ENCODE measurements at regions of chr3 and their contacts with region 1.

Region 1: DNA sequence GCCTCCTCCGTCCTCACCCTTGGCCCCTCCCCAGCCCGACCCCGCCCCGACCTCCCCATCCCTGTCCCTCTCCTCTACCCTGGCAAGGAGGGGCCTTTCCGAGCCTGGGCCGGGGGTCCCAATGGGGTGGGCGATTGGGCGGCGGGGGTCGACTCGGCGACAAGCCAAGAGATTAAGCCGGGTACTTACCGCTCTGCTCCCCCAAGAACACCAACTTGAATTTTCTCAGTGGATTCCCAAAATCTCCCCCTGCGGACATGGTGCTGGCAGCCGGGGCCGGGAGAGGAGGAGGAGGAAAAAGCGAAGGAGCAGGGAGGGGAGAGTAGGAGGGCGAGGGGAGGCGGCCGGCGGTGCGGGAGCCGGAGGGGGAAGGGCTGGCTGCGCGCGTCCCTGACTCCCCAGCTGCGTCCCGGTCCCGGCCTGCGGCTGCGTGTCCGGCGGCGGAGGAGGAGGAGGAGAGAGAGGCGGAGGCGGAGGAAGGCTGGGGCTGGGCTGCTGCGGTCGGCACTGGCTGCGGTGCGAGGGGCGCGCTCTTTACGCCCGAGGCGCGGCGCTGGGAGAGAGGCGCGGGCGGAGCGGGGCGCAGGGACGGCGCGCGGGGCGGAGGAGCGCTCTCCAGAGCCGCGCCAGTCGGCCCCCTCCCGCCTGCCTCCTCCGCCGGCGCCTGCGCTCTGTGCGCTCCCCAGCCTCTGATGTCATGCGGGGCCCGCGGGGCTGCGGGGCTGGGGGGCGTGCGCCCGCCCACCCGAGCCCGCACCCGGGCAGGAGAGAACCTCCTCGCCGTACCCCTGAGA is at the start of gene RAB6B:
- DNase-seq: peak; percentile 48 to 75 (median 54)
- ATAC-seq: peak; percentile 40 to 86 (median 73)
- H3K4me3 ChIP-seq: peak within 1 kb of the TSS; percentile 60 to 85 (median 72)
- H3K27ac ChIP-seq: peak within 1 kb of the TSS in 10 of 12 donors; percentile 9 to 78 (median 52)
- H3K4me1 ChIP-seq: peaks cover 0 to 44% (median 17%) of the 10 kb centered on the region in 12 donors
- H3K27me3 ChIP-seq: peaks cover 0 to 29% (median 0%) of the 10 kb centered on the region in 9 donors
- CTCF ChIP-seq: no peak
- POLR2A ChIP-seq: peak in 1 of 2 donors; percentile 35
- total RNA-seq, gene RAB6B: 12.4 to 57.2 (median 44.6) TPM

Region 2: DNA sequence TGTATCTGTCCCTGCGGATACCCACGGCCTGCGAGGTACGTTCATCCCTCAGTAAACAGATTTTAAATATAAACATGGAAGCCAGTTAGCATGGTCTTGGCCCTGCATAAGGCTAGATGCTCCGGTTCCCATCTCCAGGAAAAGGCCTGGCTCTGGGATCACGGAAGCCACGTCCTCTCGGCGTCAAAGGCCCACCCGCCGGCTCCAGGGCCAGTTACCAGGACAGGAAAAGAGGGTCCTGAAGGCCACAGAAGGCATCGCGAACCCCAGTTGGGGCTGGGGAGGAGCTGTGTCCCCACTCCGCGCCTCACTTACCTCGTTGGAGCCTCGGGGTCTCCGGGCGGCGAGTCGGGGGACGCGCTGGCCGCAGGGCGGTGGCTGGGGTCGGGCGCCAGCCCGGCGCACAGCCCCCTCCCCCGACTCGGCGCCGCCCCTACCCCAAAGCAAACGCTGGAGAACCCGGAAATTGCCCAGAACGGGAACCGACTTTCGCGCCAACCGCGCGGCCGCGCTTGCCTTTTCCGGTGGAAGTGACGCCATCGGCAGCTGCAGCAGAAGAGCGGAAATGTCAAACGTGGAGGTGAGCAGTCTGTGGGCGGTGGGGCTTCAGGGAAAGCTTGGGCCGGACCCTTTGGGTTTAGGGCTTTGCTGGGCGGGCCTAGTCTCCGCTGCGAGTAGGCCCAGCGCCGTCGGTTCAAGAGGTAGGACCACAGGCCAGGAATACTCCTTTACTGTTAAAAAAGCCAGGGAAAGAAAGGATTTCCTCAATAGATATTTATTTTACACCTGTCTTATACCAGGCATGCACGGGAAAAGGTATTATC is 233.7 kb before region 1 on chr3 and contains the start of gene TOPBP1:
- intact Hi-C with region 1: loop called in 2 of 10 experiments (anchors 10 kb)
- DNase-seq: peak; percentile 81 to 90 (median 84)
- ATAC-seq: peak; percentile 57 to 95 (median 94)
- H3K4me3 ChIP-seq: peak within 1 kb of the TSS; percentile 75 to 92 (median 85)
- H3K27ac ChIP-seq: peak within 1 kb of the TSS; percentile 50 to 92 (median 82)
- H3K4me1 ChIP-seq: peaks cover 0 to 30% (median 15%) of the 10 kb centered on the region in 12 donors
- H3K27me3 ChIP-seq: no peaks in the 10 kb centered on the region
- CTCF ChIP-seq: no peak
- POLR2A ChIP-seq: peak in 1 of 2 donors; percentile 12
- total RNA-seq, gene TOPBP1: 7.9 to 18.3 (median 11.8) TPM

Region 3: GRCh38 chr3:133821767-133822638 is 73.4 kb before region 1 on chr3:
- intact Hi-C with region 1: loop called in 7 of 10 experiments (anchors 2 to 10 kb)
- DNase-seq: peak in 4 of 5 donors; percentile 71 to 89 (median 78)
- ATAC-seq: peak in 3 of 4 donors; percentile 44 to 80 (median 48)
- H3K4me3 ChIP-seq: no peak overlapping the region
- H3K27ac ChIP-seq: peak overlapping the region in 2 of 12 donors; percentile 2 to 23
- H3K4me1 ChIP-seq: peaks cover 0 to 11% (median 4%) of the 10 kb centered on the region in 12 donors
- H3K27me3 ChIP-seq: no peaks in the 10 kb centered on the region
- CTCF ChIP-seq: peak in 6 of 12 donors; percentile 11 to 61 (median 32)
- POLR2A ChIP-seq: no peak

Region 4: GRCh38 chr3:133828581-133829309 is 66.7 kb before region 1 on chr3:
- intact Hi-C with region 1: loop called in 6 of 10 experiments (anchors 2 to 10 kb)
- DNase-seq: peak in 4 of 5 donors; percentile 34 to 73 (median 58)
- ATAC-seq: peak; percentile 64 to 82 (median 78)
- H3K4me3 ChIP-seq: no peak overlapping the region
- H3K27ac ChIP-seq: peak overlapping the region in 7 of 12 donors; percentile 13 to 74 (median 53)
- H3K4me1 ChIP-seq: peaks cover 0 to 24% (median 9%) of the 10 kb centered on the region in 12 donors
- H3K27me3 ChIP-seq: no peaks in the 10 kb centered on the region
- CTCF ChIP-seq: no peak
- POLR2A ChIP-seq: no peak

Region 5: DNA sequence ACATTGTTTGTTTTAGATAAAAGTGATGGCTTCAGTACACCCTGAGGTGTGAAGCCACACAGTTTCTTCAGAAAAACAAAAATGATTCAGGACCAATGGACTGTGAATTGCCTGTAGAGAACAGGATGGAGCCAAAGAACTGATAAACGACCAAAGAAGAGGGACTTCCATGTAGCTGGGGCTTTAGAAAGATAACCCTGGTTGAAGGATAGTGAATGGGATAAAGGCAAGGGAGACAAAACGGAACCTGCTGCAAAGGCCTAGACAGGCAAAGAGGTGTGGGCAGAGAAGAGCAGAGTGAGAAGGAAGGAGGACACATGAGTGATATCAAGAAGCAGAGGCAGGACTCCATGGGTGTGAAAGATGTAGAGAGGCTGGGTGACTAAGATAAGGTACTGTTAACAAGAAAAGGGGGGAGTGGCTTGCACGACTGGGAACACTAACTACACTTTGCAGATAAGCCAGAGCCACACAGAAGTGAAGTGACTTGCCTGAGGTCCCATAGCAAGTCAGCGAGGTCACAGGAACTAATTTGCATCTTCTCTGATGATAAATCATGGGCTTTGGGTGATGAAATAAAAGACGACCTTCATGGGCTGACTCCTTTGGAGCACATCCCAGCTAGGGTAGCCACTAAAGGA is 44.0 kb before region 1 on chr3:
- intact Hi-C with region 1: loop called in 1 of 10 experiments (anchors 5 kb)
- DNase-seq: no peak
- ATAC-seq: no peak
- H3K4me3 ChIP-seq: no peak overlapping the region
- H3K27ac ChIP-seq: no peak overlapping the region
- H3K4me1 ChIP-seq: peaks cover 0 to 33% (median 13%) of the 10 kb centered on the region in 12 donors
- H3K27me3 ChIP-seq: no peaks in the 10 kb centered on the region
- CTCF ChIP-seq: no peak
- POLR2A ChIP-seq: no peak

Region 6: GRCh38 chr3:133868186-133868585 is 27.2 kb before region 1 on chr3:
- intact Hi-C with region 1: loop called in 1 of 10 experiments (anchors 1 kb)
- DNase-seq: no peak
- ATAC-seq: peak in 3 of 4 donors; percentile 11 to 67 (median 42)
- H3K4me3 ChIP-seq: no peak overlapping the region
- H3K27ac ChIP-seq: peak overlapping the region in 2 of 12 donors; percentile 29 to 34
- H3K4me1 ChIP-seq: peaks cover 0 to 28% (median 0%) of the 10 kb centered on the region in 12 donors
- H3K27me3 ChIP-seq: no peaks in the 10 kb centered on the region
- CTCF ChIP-seq: no peak
- POLR2A ChIP-seq: no peak

Measured in heart left ventricle (tissue), 16 donors.